Activated CD4-positive, alpha-beta T cell treated with anti-CD3 and anti-CD28 coated beads for 36 hours (primary cell): ENCODE measurements at regions of chr1 and their contacts with region 1.

Region 1: GRCh38 chr1:40040511-40041465 is at the start of gene CAP1:
- DNase-seq: peak; percentile 100
- ATAC-seq: peak; percentile 93
- H3K4me3 Mint-ChIP-seq: peak within 1 kb of the TSS; percentile 99
- H3K27ac Mint-ChIP-seq: peak within 1 kb of the TSS; percentile 99
- H3K4me1 Mint-ChIP-seq: peaks cover 58% of the 10 kb centered on the region
- H3K27me3 Mint-ChIP-seq: no peaks in the 10 kb centered on the region
- total RNA-seq, gene CAP1: 527 to 553 TPM

Region 2: DNA sequence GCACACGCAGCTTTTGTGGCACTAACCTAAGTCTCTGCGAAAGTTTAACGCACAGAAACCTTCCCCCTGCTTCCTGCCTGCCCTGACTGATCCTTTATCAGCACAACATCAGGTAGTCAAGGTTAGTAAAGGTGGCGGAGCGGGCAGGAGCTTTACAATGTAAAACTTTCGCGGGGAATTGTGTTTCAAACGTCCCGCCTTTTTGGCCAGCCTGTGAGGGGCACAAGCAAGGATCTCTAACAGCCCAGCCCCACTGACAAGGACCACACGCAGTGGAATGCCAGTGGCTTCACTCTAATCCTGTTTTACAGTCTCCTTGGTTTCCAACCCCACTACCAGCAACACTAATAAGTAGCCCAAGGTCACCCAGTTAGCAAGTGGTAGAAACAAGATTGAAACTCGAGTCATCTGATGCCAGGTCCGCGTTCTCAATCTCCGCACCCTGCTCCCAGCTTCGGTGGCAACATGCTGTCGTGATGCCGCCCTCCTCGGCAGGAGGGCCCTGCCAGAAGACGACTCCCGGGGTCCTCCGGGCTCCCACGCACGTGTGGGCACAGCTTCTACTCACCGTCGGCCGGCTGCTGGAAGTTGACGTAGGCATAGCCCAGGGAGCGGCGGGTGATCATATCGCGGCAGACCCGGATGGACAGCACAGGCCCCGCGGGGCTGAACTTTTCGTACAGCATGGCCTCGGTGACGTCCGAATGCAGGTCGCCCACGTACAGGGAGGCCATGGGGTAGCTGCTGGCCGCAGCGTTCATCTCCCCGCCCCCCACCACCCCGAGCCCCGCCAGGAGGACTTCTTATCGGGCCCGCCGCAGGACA is 465.4 kb before region 1 on chr1:
- CTCF ChIA-PET with region 1: no interaction called
- POLR2A ChIA-PET with region 1: no interaction called
- intact Hi-C with region 1: loop called in 1 of 2 experiments (anchors 5 kb)
- DNase-seq: peak; percentile 69
- ATAC-seq: peak; percentile 40
- H3K4me3 Mint-ChIP-seq: peak overlapping the region; percentile 90
- H3K27ac Mint-ChIP-seq: peak overlapping the region; percentile 90
- H3K4me1 Mint-ChIP-seq: peaks cover 42% of the 10 kb centered on the region
- H3K27me3 Mint-ChIP-seq: no peaks in the 10 kb centered on the region

Region 3: GRCh38 chr1:39954816-39955546 is 85.8 kb before region 1 on chr1 and contains the start of gene MFSD2A:
- CTCF ChIA-PET with region 1: no interaction called
- POLR2A ChIA-PET with region 1: interaction called, 3 read pairs
- intact Hi-C with region 1: loop called in 1 of 2 experiments (anchors 1 kb)
- DNase-seq: peak; percentile 96
- ATAC-seq: peak; percentile 94
- H3K4me3 Mint-ChIP-seq: peak within 1 kb of the TSS; percentile 88
- H3K27ac Mint-ChIP-seq: peak within 1 kb of the TSS; percentile 82
- H3K4me1 Mint-ChIP-seq: peaks cover 32% of the 10 kb centered on the region
- H3K27me3 Mint-ChIP-seq: no peaks in the 10 kb centered on the region
- total RNA-seq, gene MFSD2A: 8.8 to 12.8 TPM

Region 4: GRCh38 chr1:40096977-40097782 is 56.4 kb after region 1 on chr1 and contains the start of gene PPT1:
- CTCF ChIA-PET with region 1: no interaction called
- POLR2A ChIA-PET with region 1: interaction called, 5 read pairs
- intact Hi-C with region 1: loop called in 1 of 2 experiments (anchors 2 kb)
- DNase-seq: peak; percentile 91
- ATAC-seq: peak; percentile 96
- H3K4me3 Mint-ChIP-seq: peak within 1 kb of the TSS; percentile 90
- H3K27ac Mint-ChIP-seq: peak within 1 kb of the TSS; percentile 91
- H3K4me1 Mint-ChIP-seq: peaks cover 37% of the 10 kb centered on the region
- H3K27me3 Mint-ChIP-seq: peaks cover 4% of the 10 kb centered on the region
- total RNA-seq, gene PPT1: 75.4 to 77.4 TPM

Region 5: DNA sequence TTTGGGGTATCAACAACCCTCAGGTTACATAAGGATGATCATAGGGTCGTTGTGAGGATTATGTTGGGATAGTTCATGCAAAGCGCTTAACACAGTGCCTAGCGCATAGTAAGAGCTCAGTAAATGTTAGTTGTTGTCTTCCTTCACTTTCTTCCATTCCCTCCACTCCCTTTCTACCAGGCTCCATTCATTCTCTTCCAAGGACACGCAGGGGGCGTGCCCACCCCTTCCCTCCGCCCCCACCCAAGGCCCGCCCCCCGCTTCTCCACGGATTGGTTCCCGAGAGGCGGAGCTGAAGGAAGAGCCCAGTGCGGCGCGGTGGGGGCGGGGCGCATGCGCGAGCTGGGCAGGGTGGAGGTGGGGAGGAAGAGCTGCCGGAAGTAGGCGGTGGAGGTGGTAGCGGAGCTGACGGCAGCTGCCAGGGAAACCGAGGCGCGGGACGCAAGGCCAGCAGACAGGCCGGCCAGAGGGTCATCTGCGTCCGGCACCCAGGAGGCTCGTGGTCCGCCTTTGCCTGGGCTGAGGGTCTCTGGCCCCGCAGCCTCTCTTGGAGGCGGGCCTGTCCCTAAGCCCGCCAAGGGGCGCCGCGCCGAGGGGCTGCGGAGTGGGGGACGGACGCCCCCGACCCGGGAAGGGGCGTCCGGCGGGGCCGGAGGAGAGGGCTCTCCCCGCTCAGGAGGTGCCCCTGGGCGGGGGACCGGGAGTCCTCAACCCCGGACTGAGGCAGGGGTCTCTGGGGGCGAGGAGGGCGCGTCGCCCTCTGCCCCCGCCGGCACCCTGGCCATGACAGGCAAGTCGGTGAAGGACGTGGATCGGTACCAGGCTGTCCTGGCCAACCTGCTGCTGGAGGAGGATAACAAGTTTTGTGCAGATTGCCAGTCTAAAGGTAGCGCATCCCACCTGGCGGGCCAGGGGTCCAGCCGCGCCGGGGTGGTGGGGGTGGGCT is 332.8 kb after region 1 on chr1 and contains the start of gene SMAP2:
- CTCF ChIA-PET with region 1: no interaction called
- POLR2A ChIA-PET with region 1: no interaction called
- intact Hi-C with region 1: loop called in 1 of 2 experiments (anchors 5 kb)
- DNase-seq: peak; percentile 98
- ATAC-seq: peak; percentile 85
- H3K4me3 Mint-ChIP-seq: peak within 1 kb of the TSS; percentile 100
- H3K27ac Mint-ChIP-seq: peak within 1 kb of the TSS; percentile 99
- H3K4me1 Mint-ChIP-seq: peaks cover 44% of the 10 kb centered on the region
- H3K27me3 Mint-ChIP-seq: no peaks in the 10 kb centered on the region
- total RNA-seq, gene SMAP2: 241 to 258 TPM

Region 6: GRCh38 chr1:40519517-40519916 is 478.7 kb after region 1 on chr1:
- CTCF ChIA-PET with region 1: no interaction called
- POLR2A ChIA-PET with region 1: no interaction called
- intact Hi-C with region 1: no loop called
- DNase-seq: no peak
- ATAC-seq: no peak
- H3K4me3 Mint-ChIP-seq: no peak overlapping the region
- H3K27ac Mint-ChIP-seq: no peak overlapping the region
- H3K4me1 Mint-ChIP-seq: no peaks in the 10 kb centered on the region
- H3K27me3 Mint-ChIP-seq: peaks cover 3% of the 10 kb centered on the region